H1 (cell line): ENCODE measurements at regions of chr20 and their contacts with region 1.

Region 1: GRCh38 chr20:46349035-46349741 is 40.9 kb upstream of the CDH22 start:
- DNase-seq: peak in 1 of 2 experiments; percentile 86
- H3K4me3 ChIP-seq: peak overlapping the region in 1 of 4 experiments; percentile 34; a peak in 1 of 8 replicates
- H3K27ac ChIP-seq: no peak overlapping the region
- H3K4me1 ChIP-seq: peaks cover 0 to 27% (median 17%) of the 10 kb centered on the region in 4 experiments; a peak in 6 of 7 replicates
- H3K27me3 ChIP-seq: peaks cover 0 to 5% (median 1%) of the 10 kb centered on the region in 4 experiments; a peak in 4 of 7 replicates
- CTCF ChIP-seq: peak; percentile 80 to 90 (median 89)
- EP300 ChIP-seq: no peak
- POLR2A ChIP-seq: no peak
- RAD21 ChIP-seq: peak; percentile 91 to 96

Region 2: DNA sequence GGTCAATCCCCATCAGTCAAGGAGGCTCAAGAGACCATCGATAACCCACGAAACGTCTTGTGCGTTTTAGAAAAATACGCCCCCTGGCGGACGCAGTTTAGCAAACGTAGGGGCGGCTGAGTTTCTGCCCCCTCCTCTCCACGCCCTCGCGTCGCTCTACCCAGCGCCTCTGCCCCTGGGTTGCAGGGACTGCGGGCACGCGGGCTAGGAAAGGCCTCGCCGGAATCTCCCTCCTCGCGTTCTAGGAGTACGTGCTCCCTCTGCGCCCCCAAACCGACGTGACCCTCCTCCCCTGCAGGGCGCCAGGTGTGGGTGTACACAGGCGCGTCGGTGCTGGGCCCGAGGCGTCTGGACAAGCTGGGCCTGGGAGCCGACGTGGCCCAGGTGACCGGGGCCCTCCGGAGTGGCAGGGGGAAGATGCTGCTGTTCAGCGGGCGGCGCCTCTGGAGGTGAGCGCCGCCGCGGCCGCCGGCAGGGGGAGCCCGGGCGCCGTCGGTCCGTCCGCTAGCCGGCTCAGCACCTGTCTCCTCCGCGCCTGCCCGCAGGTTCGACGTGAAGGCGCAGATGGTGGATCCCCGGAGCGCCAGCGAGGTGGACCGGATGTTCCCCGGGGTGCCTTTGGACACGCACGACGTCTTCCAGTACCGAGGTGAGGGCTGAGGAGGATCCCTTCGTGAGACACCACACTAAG is 335.2 kb before region 1 on chr20:
- CTCF ChIA-PET with region 1: interaction called, 14 read pairs
- POLR2A ChIA-PET with region 1: no interaction called
- DNase-seq: peak in 1 of 2 experiments; percentile 91
- H3K4me3 ChIP-seq: peak overlapping the region; percentile 23 to 60 (median 38)
- H3K27ac ChIP-seq: 0 out of 2 replicates have a peak overlapping the region, but pooled peaks have one; percentile 4
- H3K4me1 ChIP-seq: peaks cover 0 to 4% (median 2%) of the 10 kb centered on the region in 4 experiments; a peak in 3 of 7 replicates
- H3K27me3 ChIP-seq: peaks cover 0 to 7% (median 5%) of the 10 kb centered on the region in 4 experiments; a peak in 4 of 7 replicates
- CTCF ChIP-seq: peak; percentile 75 to 95 (median 80)
- EP300 ChIP-seq: peak in 1 of 2 experiments; percentile 49; a peak in 1 of 3 replicates
- POLR2A ChIP-seq: peak in 1 of 2 experiments; percentile 45; a peak in 1 of 3 replicates
- RAD21 ChIP-seq: peak; percentile 75 to 84

Region 3: GRCh38 chr20:46139908-46140482 is 209.2 kb before region 1 on chr20:
- CTCF ChIA-PET with region 1: interaction called, 55 read pairs
- POLR2A ChIA-PET with region 1: no interaction called
- DNase-seq: no peak
- H3K4me3 ChIP-seq: no peak overlapping the region
- H3K27ac ChIP-seq: no peak overlapping the region
- H3K4me1 ChIP-seq: peaks cover 3 to 18% (median 11%) of the 10 kb centered on the region in 4 experiments
- H3K27me3 ChIP-seq: no peaks in the 10 kb centered on the region
- CTCF ChIP-seq: no peak
- EP300 ChIP-seq: no peak
- POLR2A ChIP-seq: no peak
- RAD21 ChIP-seq: no peak

Region 4: GRCh38 chr20:46261456-46262253 is 87.5 kb before region 1 on chr20:
- CTCF ChIA-PET with region 1: interaction called, 16 read pairs
- POLR2A ChIA-PET with region 1: no interaction called
- DNase-seq: no peak
- H3K4me3 ChIP-seq: no peak overlapping the region
- H3K27ac ChIP-seq: no peak overlapping the region
- H3K4me1 ChIP-seq: no peaks in the 10 kb centered on the region
- H3K27me3 ChIP-seq: no peaks in the 10 kb centered on the region
- CTCF ChIP-seq: no peak
- EP300 ChIP-seq: no peak
- POLR2A ChIP-seq: no peak
- RAD21 ChIP-seq: no peak

Region 5: DNA sequence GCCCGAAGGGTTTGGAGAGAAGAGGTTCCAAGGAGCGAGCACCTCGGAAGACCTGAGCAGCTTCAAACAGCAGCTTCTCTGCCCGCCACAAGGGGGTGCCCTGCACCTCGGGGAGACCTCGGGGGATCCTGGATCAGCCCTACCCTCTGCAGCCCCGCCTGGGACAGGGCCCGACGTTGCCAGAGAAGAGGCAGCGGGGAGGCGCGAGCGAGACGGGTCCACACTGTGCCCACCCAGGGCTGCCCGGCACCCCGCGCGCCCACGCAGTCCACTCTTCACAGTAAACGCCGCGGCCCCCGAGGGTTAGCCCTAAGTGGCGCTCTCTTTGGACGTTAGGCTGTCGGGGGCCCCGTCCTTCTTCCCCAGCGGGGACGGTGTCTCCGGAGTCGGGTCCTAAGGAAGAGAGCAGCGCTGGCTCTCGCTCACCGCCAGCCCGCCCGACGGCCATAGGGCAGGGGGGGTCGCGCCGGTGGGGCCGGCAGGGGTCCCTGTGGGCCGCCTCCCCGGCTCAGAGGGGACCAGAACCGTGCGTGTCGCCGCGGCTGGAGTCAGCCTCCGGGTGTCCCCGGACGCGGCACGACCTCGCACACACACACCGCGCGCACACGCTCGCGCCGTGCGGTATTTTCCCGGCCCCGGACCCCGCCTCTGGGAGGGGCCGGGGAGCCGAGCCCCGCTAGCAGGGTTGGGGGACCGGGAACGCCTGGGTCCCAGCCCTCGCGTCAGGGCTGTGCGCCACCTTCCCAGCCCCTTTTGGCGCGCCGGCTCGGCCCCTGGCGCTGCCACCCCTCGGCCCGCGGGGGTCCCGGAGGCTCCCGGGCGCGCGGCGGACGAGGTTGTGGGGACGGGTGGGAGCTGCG is 41.8 kb before region 1 on chr20:
- CTCF ChIA-PET with region 1: interaction called, 76 read pairs
- POLR2A ChIA-PET with region 1: interaction called, 11 read pairs
- DNase-seq: peak; percentile 49 to 89
- H3K4me3 ChIP-seq: peak overlapping the region; percentile 48 to 75 (median 55)
- H3K27ac ChIP-seq: no peak overlapping the region
- H3K4me1 ChIP-seq: peaks cover 0 to 7% (median 5%) of the 10 kb centered on the region in 4 experiments; a peak in 5 of 7 replicates
- H3K27me3 ChIP-seq: peaks cover 44 to 73% (median 67%) of the 10 kb centered on the region in 4 experiments
- CTCF ChIP-seq: peak; percentile 92 to 97 (median 96)
- EP300 ChIP-seq: 0 out of 3 replicates have a peak, but pooled peaks of 1 of the 2 experiments have one; percentile 22
- POLR2A ChIP-seq: no peak
- RAD21 ChIP-seq: peak; percentile 81 to 90

Region 6: GRCh38 chr20:46324960-46325703 is 24.1 kb before region 1 on chr20:
- CTCF ChIA-PET with region 1: interaction called, 214 read pairs
- POLR2A ChIA-PET with region 1: interaction called, 5 read pairs
- DNase-seq: no peak
- H3K4me3 ChIP-seq: no peak overlapping the region
- H3K27ac ChIP-seq: no peak overlapping the region
- H3K4me1 ChIP-seq: peaks cover 0 to 3% (median 2%) of the 10 kb centered on the region in 4 experiments; a peak in 4 of 7 replicates
- H3K27me3 ChIP-seq: 0 out of 7 replicates have a peak, but pooled peaks cover 0 to 2% (median 0%) of the 10 kb centered on the region in 4 experiments
- CTCF ChIP-seq: peak; percentile 31 to 58 (median 51)
- EP300 ChIP-seq: no peak
- POLR2A ChIP-seq: no peak
- RAD21 ChIP-seq: peak; percentile 28 to 55; a peak in 2 of 4 replicates

Region 7: GRCh38 chr20:46336735-46337134 is 12.5 kb before region 1 on chr20:
- CTCF ChIA-PET with region 1: interaction called, 214 read pairs
- POLR2A ChIA-PET with region 1: interaction called, 10 read pairs
- DNase-seq: no peak
- H3K4me3 ChIP-seq: no peak overlapping the region
- H3K27ac ChIP-seq: no peak overlapping the region
- H3K4me1 ChIP-seq: peaks cover 0 to 22% (median 6%) of the 10 kb centered on the region in 4 experiments; a peak in 6 of 7 replicates
- H3K27me3 ChIP-seq: peaks cover 0 to 6% (median 4%) of the 10 kb centered on the region in 4 experiments; a peak in 5 of 7 replicates
- CTCF ChIP-seq: no peak
- EP300 ChIP-seq: no peak
- POLR2A ChIP-seq: no peak
- RAD21 ChIP-seq: no peak

Region 8: GRCh38 chr20:46393967-46394366 is 44.8 kb after region 1 on chr20:
- CTCF ChIA-PET with region 1: no interaction called
- POLR2A ChIA-PET with region 1: no interaction called
- DNase-seq: no peak
- H3K4me3 ChIP-seq: no peak overlapping the region
- H3K27ac ChIP-seq: no peak overlapping the region
- H3K4me1 ChIP-seq: no peaks in the 10 kb centered on the region
- H3K27me3 ChIP-seq: no peaks in the 10 kb centered on the region
- CTCF ChIP-seq: no peak
- EP300 ChIP-seq: no peak
- POLR2A ChIP-seq: no peak
- RAD21 ChIP-seq: no peak

Region 9: GRCh38 chr20:46592580-46593362 is 243.6 kb after region 1 on chr20:
- CTCF ChIA-PET with region 1: no interaction called
- POLR2A ChIA-PET with region 1: no interaction called
- DNase-seq: no peak
- H3K4me3 ChIP-seq: no peak overlapping the region
- H3K27ac ChIP-seq: no peak overlapping the region
- H3K4me1 ChIP-seq: peaks cover 0 to 8% (median 6%) of the 10 kb centered on the region in 4 experiments; a peak in 4 of 7 replicates
- H3K27me3 ChIP-seq: no peaks in the 10 kb centered on the region
- CTCF ChIP-seq: peak; percentile 39 to 56 (median 51); a peak in 3 of 4 replicates
- EP300 ChIP-seq: no peak
- POLR2A ChIP-seq: no peak
- RAD21 ChIP-seq: peak in 1 of 2 experiments; percentile 46; a peak in 1 of 4 replicates